Right ventricle myocardium inferior (tissue), 1 donor: ENCODE measurements at regions of chr13 and their contacts with region 1.

Region 1: GRCh38 chr13:44050450-44051063 is 170.9 kb downstream of the LACC1 start:
- DNase-seq: no peak
- ATAC-seq: no peak

Region 2: DNA sequence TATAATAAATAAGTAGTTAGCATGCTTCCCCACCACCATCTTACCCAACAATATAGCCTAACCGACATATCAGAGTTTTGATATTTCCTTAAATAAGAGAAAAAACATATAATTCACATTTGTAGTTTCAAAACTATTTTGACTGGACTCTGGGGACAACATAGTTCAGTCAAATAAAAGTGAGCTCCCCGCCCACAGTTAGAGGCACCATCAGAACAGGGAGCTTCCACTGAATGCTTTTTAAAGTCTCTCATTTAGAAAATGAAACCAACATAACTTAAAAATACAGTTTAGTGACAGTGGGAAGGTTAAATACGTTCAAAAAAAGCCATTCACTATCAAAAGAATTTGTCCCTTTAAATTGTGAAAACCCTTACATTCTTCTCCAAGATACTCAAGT is 1151.3 kb before region 1 on chr13:
- intact Hi-C with region 1: no loop called
- DNase-seq: no peak
- ATAC-seq: no peak

Region 3: DNA sequence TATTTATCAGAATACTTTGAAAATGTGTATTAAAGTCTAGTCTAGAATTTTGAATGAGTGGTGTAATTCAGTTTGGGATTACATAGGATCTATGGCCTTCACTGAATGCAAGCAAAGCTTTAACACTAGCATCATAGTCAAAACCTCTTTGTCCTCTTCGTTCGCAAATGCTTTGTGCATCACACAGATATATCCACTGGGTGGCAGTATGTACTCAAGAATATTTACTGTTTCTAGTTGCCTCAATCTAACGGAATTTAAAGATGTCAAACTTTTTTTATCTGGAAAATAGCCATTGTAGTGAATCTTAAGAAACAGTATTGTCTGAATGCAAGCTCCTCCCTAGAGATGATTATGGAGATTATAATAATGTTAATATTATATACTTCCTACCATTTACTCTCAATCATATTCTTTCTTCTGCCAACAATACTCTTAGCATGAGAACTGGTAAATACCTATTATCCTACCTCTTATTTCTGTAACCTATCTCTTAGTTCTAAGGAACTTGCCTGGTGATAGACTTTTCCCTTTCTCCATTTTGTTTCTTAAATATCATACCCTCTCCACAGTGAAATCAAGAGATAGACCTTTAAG is 145.0 kb before region 1 on chr13:
- intact Hi-C with region 1: loop called (anchors 1 kb)
- DNase-seq: no peak
- ATAC-seq: peak; percentile 65

Region 4: DNA sequence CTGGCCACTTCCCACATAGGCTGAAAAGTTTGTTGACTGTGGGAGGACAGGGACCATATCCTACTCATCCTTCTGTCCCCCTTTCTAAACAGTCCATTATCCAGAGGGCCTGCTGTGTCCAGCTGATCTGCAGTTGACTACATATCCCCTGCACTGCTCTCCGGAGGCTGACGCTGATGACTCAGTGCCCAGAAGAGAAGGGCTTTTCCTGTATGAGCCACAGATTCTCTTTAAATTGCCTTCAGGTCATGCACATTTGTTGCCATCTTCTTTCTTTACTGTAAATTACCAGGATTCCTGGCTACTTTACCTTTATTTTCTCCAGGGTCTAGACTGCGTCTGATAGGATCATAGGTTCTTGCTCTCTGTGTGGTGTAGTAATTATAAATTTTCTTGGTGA is 45.7 kb before region 1 on chr13:
- intact Hi-C with region 1: no loop called
- DNase-seq: no peak
- ATAC-seq: no peak

Region 5: GRCh38 chr13:44108331-44108858 is 57.8 kb after region 1 on chr13:
- intact Hi-C with region 1: loop called (anchors 2 kb)
- DNase-seq: peak; percentile 69
- ATAC-seq: peak; percentile 88

Region 6: DNA sequence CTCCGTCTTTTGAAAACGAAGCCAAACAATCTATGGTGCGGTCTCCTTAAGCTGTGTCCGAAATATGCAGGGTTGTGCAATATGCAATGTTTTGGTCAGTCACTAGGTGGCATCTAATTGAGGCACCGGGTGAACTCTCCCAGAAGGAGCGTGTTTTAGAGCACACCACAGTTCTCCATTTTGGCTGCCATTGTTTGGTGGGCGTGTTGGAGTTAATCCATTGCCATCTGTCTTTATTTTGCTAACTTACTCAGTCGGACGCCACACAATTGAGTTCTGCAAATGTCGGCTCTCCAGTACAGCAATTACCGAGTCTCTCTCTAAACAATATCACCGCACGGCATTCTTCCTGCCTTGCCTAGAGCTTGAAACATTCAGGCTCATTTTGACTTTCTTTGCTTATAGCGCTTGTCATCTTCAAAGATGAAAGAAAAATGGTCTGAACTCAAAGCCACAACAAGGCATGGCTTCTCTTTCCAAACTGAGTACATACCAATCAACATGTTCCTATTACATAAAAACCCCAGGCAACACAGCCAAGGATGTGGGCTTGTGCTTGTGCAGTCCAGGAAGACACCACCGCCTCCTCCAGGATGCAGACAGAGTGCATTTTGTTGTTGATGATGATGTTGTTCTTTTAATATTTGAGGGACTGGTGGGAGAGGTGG is 141.1 kb after region 1 on chr13:
- intact Hi-C with region 1: loop called (anchors 2 kb)
- DNase-seq: no peak
- ATAC-seq: peak; percentile 93

Region 7: DNA sequence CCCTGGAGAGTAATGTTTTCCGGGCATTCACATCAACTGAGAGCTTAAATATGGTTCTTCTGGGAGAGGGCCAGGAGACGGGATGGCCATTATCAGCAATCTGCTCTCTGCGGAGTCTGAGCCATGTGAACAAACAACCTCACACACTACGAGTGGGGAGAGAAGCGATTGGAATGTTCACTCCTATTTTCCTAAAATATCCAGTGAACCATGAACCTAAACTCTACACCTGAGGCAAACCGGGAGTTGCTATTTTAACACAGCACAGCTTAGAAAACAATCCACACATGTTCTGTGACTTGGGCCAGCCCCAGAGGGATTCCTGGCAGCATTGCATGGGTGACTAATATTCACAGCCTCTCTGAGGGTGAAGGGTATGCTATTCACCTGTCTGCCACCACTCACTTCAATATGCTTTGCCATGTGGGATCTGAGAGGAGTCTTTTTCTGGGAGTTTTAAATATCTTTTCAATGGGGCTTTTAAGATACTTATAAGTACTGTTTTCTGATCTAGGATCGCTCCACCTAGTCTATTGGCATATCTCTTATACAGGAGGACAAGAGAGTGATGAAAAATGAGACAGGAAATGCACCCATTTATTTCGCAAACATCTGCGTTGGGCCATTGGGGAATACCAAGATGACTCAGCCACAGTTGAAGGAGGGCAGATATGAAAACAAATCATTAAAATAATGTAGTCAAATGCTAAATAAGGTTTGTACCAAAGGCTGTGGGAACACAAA is 250.5 kb after region 1 on chr13:
- intact Hi-C with region 1: loop called (anchors 5 kb)
- DNase-seq: no peak
- ATAC-seq: peak; percentile 77